ENCODE measurements at regions of chr5 and their contacts with region 1.

Region 1: GRCh38 chr5:36944607-36945225 is 68.1 kb downstream of the NIPBL start:
- DNase-seq: no peak

Region 2: GRCh38 chr5:36915653-36916052 is 29.1 kb before region 1 on chr5:
- intact Hi-C with region 1: loop called in 1 of 2 experiments (anchors 2 kb)
- DNase-seq: no peak

Region 3: GRCh38 chr5:36932699-36933098 is 12.0 kb before region 1 on chr5:
- intact Hi-C with region 1: no loop called
- DNase-seq: no peak

Region 4: DNA sequence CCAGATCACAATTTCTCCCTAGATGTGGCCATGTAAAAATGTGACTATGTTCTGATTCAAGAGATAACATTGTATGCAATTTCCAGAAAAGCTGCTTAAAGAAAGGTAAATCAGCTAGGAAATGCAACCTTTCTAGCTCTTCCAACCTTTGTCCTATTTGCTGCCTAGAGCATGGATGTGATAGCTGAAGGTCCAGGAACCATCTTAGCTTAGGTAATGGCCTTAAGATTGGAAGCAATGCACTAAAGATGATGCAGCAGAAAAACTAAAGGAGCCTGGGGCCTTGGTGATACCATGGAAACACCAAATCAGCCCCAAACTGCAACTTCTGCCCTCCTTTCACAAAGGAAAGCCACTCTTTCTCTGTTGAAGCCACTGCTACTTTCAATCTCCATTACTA is 277.5 kb after region 1 on chr5:
- intact Hi-C with region 1: loop called in 1 of 2 experiments (anchors 5 kb)
- DNase-seq: no peak

Measured in posterior vena cava (tissue), 2 donors.